Heart left ventricle (tissue), 16 donors: ENCODE measurements at regions of chr16 and their contacts with region 1.

Region 1: DNA sequence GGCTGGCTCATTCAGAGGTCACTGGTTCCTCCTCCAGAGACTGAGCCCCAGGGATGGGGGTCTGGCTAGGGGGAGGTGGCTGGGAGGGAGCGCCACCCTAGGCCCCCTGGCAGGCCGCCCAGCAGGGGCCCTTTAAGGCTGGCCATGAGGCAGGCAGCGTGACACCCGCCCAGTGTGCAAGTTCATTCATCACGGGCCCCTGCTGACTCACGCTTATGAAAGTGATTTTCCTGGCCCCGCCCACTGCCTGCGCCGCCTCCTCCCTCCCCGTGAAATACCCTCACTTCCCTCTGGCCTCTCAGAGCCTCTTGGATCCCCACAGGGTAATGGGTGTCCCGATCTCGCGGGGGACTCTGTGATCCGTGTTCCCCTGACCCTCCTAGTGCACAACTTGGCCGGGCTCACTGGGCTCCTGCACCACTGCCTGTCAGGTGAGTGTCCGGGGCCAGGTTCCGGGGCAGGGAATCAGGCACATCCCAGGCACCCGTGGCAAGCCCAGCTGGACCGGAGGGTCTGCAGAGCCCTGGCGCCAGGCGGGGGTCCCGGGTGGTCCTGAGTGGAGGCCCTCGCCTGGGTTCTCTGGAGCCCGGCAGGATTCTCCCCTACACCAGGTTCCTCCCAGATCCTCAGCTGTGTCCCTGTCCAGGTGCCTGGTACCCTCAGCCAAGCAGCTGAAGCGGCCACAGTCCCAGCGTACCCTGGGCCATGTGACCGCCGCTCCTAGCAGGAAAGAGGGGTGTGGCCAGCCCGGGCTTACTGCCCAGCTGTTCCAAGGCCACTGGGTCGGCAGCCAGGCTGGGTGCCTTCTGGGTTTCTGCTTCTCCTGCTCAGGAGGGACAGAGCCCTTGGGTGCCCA is at the start of gene OSGIN1:
- DNase-seq: peak; percentile 92 to 96 (median 93)
- ATAC-seq: peak; percentile 89 to 94 (median 92)
- H3K4me3 ChIP-seq: peak within 1 kb of the TSS; percentile 36 to 87 (median 63)
- H3K27ac ChIP-seq: peak within 1 kb of the TSS; percentile 64 to 99 (median 94)
- H3K4me1 ChIP-seq: peaks cover 0 to 49% (median 28%) of the 10 kb centered on the region in 12 donors
- H3K27me3 ChIP-seq: no peaks in the 10 kb centered on the region
- CTCF ChIP-seq: no peak
- POLR2A ChIP-seq: peak; percentile 48 to 94
- total RNA-seq, gene OSGIN1: 3.3 to 11.0 (median 7.0) TPM

Region 2: DNA sequence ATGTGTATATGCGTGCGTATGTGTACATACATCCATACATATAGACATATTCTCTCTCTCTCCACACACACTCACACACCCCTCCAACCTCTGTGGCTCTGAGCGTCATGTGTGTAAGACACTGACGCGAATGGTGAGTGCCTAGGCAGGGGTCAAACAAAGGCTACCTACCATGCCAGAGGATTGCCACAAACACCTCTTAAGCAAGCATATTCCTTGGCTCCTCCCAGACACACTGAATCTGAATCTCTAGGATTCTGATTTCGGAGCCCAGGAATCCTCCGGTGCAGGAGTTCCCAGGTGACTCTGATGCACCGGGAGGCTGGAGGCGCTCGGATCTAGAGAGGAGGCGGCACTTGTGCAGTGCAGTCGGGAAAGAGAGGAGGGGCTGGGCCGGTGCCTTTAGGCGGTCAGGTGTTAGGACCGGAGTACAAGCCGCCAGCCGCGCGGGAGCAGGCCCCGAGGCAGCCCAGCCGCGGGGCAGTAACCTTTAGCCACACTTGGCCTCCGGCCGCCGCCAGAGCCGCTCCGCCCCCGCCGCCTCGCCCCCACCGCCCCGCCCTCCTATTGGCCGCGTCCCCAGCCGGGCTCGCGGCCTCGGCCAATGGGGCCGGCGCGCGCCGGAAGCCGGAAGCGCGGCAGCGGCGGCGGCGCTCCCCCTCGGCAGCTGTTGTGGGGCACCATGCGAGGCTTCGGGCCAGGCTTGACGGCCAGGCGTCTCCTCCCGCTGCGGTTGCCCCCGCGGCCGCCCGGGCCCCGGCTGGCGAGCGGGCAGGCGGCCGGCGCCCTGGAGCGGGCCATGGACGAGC is 54.5 kb before region 1 on chr16 and contains the start of gene MLYCD:
- intact Hi-C with region 1: loop called in 2 of 10 experiments (anchors 5 kb)
- DNase-seq: peak; percentile 89 to 93 (median 92)
- ATAC-seq: peak; percentile 86 to 91 (median 90)
- H3K4me3 ChIP-seq: peak within 1 kb of the TSS; percentile 65 to 98 (median 90)
- H3K27ac ChIP-seq: peak within 1 kb of the TSS; percentile 88 to 99 (median 98)
- H3K4me1 ChIP-seq: peaks cover 0 to 48% (median 30%) of the 10 kb centered on the region in 12 donors
- H3K27me3 ChIP-seq: no peaks in the 10 kb centered on the region
- CTCF ChIP-seq: peak in 1 of 12 donors; percentile 6
- POLR2A ChIP-seq: peak; percentile 31 to 51
- total RNA-seq, gene MLYCD: 22.5 to 65.3 (median 40.2) TPM

Region 3: GRCh38 chr16:83903751-83904150 is 49.4 kb before region 1 on chr16:
- intact Hi-C with region 1: loop called in 2 of 10 experiments (anchors 5 kb)
- DNase-seq: peak; percentile 77 to 88 (median 82)
- ATAC-seq: peak; percentile 83 to 91 (median 85)
- H3K4me3 ChIP-seq: peak overlapping the region in 6 of 12 donors; percentile 3 to 36 (median 21)
- H3K27ac ChIP-seq: peak overlapping the region; percentile 33 to 99 (median 86)
- H3K4me1 ChIP-seq: peaks cover 0 to 70% (median 35%) of the 10 kb centered on the region in 12 donors
- H3K27me3 ChIP-seq: no peaks in the 10 kb centered on the region
- CTCF ChIP-seq: no peak
- POLR2A ChIP-seq: no peak

Region 4: GRCh38 chr16:83913245-83913633 is 39.9 kb before region 1 on chr16:
- intact Hi-C with region 1: loop called in 1 of 10 experiments (anchors 5 kb)
- DNase-seq: peak; percentile 80 to 92 (median 85)
- ATAC-seq: peak; percentile 91 to 96 (median 95)
- H3K4me3 ChIP-seq: no peak overlapping the region
- H3K27ac ChIP-seq: peak overlapping the region; percentile 42 to 79 (median 74)
- H3K4me1 ChIP-seq: peaks cover 0 to 29% (median 11%) of the 10 kb centered on the region in 12 donors
- H3K27me3 ChIP-seq: no peaks in the 10 kb centered on the region
- CTCF ChIP-seq: peak in 1 of 12 donors; percentile 7
- POLR2A ChIP-seq: no peak

Region 5: DNA sequence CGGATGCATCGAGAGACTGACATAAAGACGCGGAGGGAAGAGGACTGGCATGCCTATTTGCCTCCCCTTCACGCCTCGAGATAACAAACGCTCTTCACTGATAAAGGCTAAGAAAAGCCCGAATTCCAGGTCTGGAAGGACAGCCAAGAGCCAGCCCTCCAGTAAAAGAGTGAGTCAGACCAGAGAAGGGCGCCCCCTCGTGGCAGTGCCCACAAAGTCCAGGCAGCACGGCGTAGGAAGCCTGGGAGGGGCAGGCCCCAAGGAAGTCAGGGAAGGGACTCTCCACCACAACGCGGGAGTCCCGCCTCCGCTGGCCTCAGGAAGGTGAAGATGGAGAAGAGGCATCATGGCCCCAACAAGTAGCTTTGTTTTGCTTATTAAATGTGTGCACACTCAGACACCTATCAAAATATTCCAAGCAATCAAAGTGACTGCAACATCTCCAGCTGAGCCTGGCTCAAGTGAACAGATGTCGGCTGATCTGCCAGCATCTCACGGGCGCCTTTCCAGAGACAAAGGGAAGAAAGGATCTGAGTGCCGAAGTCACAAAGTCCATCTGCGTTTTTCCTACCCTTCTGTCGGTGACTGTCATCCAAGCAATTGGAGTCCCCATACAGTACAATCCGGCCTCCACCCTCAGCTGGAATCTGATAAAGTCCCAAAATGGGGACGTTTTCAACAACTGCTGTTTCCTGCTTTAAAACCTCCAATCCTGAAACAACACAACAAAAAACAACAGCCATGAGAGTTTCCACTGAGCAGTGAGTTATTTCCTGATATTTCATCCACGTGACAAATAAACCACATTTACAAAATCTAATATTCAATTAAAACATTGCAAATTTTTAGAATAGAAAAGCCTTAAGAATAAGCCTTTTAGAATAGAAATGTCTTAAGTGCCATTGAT is 109.8 kb after region 1 on chr16:
- intact Hi-C with region 1: loop called in 3 of 10 experiments (anchors 1 to 5 kb)
- DNase-seq: peak; percentile 73 to 85 (median 80)
- ATAC-seq: peak; percentile 60 to 85 (median 85)
- H3K4me3 ChIP-seq: no peak overlapping the region
- H3K27ac ChIP-seq: peak overlapping the region in 5 of 12 donors; percentile 11 to 46 (median 31)
- H3K4me1 ChIP-seq: peaks cover 0 to 24% (median 12%) of the 10 kb centered on the region in 12 donors
- H3K27me3 ChIP-seq: no peaks in the 10 kb centered on the region
- CTCF ChIP-seq: peak; percentile 74 to 93 (median 88)
- POLR2A ChIP-seq: no peak

Region 6: GRCh38 chr16:84175350-84176081 is 222.3 kb after region 1 on chr16:
- intact Hi-C with region 1: loop called in 4 of 10 experiments (anchors 5 to 10 kb)
- DNase-seq: peak in 2 of 5 donors; percentile 55 to 57
- ATAC-seq: peak; percentile 43 to 70 (median 52)
- H3K4me3 ChIP-seq: no peak overlapping the region
- H3K27ac ChIP-seq: peak overlapping the region in 9 of 12 donors; percentile 8 to 85 (median 83)
- H3K4me1 ChIP-seq: peaks cover 7 to 55% (median 36%) of the 10 kb centered on the region in 12 donors
- H3K27me3 ChIP-seq: no peaks in the 10 kb centered on the region
- CTCF ChIP-seq: peak in 10 of 12 donors; percentile 34 to 85 (median 68)
- POLR2A ChIP-seq: no peak

Region 7: DNA sequence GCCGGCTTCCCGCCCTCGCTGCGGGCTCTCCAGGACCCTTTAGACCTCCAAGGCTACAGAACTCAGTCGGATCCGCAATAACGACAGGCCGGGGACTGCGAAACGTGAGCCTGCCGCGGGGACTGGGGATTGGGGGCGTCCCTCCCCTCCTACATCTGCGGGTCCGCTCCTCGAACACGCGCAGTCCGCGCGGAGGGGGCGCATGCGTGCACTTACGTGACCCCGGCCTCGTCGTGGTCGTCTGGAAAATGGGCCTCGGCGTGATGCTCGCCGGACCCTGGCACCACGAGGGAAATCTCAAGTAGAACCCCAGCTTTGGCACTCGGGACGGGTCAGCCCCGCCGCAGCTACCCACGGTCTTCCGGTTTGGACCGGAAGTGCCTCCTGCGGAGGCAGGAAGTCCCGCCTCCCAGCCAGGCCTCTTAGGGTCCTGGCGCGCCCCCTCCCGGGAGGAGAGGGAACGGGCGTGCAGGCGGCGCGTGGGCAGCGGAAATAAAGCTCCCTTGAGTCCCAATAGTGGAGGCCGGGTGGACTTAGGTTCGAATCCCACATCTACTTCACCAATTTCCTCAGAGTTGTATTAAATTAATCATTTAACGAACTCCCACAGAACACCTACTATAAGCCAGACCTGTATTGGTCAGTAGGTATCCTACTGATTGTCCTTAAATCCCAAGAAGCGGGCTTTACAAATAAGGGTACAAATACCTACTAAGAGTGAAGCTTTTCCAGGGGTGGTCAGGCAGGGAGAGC is 233.7 kb after region 1 on chr16 and contains the start of gene TAF1C:
- intact Hi-C with region 1: loop called in 3 of 10 experiments (anchors 5 to 10 kb)
- DNase-seq: peak; percentile 90 to 95 (median 92)
- ATAC-seq: peak; percentile 82 to 95 (median 94)
- H3K4me3 ChIP-seq: peak within 1 kb of the TSS; percentile 62 to 100 (median 87)
- H3K27ac ChIP-seq: peak within 1 kb of the TSS; percentile 56 to 90 (median 82)
- H3K4me1 ChIP-seq: peaks cover 0 to 45% (median 16%) of the 10 kb centered on the region in 12 donors
- H3K27me3 ChIP-seq: no peaks in the 10 kb centered on the region
- CTCF ChIP-seq: peak in 11 of 12 donors; percentile 92 to 99 (median 98)
- POLR2A ChIP-seq: peak in 1 of 2 donors; percentile 46
- total RNA-seq, gene TAF1C: 16.3 to 24.3 (median 21.8) TPM